ENCODE measurements at regions of chr1 and their contacts with region 1.

Region 1: DNA sequence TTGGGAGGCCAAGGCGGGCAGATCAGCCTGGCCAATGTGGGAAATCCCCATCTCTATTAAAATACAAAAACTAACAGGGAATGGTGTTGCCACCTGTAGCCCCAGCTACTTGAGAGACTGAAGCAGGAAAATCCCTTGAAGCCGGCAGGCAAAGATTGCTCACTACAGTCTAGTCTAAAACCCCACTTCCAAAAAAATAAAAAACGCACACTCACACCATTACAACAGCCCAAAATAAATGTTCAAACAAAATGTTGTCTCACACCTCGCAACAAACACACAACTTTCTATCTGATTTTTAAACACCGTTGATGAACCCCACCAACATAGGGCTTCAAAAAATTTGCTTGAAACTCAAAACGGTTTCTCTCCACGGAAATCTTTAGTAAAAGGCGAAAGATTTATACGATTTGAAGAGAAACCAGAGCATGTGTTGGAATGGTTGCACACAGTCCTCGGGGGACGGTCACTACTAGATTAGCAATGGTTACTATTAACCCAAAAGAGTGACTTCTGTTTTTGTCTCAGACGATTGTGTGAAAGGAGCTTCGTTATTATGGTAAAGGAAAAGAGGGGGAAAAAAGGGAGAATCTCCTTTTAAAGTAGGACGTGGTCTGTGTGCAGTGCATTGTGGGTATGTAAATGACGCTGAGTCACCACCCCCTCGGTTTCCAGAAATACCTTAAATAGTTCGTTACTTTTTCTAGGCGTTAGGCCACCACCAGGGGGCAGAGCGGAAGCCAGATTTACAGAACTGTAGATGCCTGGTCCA is at the start of gene RNU5D-1:
- DNase-seq: peak; percentile 98
- H3K4me3 ChIP-seq: peak within 1 kb of the TSS; percentile 46
- H3K27ac ChIP-seq: peak within 1 kb of the TSS; percentile 96
- H3K4me1 ChIP-seq: peaks cover 52% of the 10 kb centered on the region
- CTCF ChIP-seq: peak; percentile 91
- total RNA-seq, gene RNU5D-1: not detected in 2 replicates

Region 2: GRCh38 chr1:44714944-44715571 is 15.9 kb before region 1 on chr1:
- CTCF ChIA-PET with region 1: interaction called, 3 read pairs
- POLR2A ChIA-PET with region 1: interaction called, 137 read pairs
- intact Hi-C with region 1: no loop called
- DNase-seq: peak; percentile 92
- H3K4me3 ChIP-seq: peak overlapping the region; percentile 21
- H3K27ac ChIP-seq: peak overlapping the region; percentile 96
- H3K4me1 ChIP-seq: peaks cover 80% of the 10 kb centered on the region
- CTCF ChIP-seq: peak; percentile 97

Region 3: GRCh38 chr1:44775078-44775929 is 44.4 kb after region 1 on chr1 and contains the start of gene RPS8:
- CTCF ChIA-PET with region 1: interaction called, 3 read pairs
- POLR2A ChIA-PET with region 1: interaction called, 33 read pairs
- intact Hi-C with region 1: loop called (anchors 2 kb)
- DNase-seq: peak; percentile 95
- H3K4me3 ChIP-seq: peak within 1 kb of the TSS; percentile 99
- H3K27ac ChIP-seq: peak within 1 kb of the TSS; percentile 68
- H3K4me1 ChIP-seq: peaks cover 32% of the 10 kb centered on the region
- CTCF ChIP-seq: no peak
- total RNA-seq, gene RPS8: 4,149 and 4,355 TPM in 2 replicates

Region 4: DNA sequence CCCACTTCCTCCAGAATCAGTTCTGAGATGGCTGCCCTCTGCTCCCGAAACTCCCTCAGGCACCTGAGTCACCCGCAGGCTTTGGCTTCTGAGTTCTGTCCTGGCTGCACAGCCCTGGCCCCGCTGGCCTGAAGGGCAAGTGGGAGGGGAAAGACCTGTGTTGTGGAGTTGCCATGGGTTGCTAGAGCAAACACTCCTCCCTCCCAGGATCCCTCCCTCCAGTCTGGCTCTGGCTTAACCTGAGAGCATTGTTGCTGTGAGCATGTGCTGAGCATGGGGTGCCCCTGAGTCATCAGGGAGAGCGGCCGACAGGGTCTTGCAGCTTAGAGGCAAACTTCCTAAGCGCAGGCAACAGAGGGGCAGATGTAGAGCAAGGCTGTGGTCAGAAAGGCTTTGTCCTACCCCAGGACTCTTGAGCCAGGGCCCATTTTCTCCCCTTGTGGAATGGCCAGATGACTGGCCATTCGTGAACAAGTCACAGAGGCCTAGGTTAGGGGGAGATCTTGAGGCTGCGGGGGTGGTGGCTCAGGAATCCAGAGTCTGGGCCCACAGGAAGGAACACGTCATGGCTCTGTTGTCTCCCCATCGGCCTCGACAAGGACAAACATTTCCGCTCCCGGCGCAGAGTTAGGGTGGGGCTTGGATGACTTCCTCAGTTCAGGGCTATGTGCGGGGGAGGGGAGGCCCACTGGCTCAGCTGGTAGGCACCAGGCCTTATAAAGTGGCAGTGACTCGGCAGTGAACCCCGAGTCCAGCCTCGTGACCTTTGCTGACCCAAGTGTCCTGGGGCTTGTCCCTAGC is 76.5 kb after region 1 on chr1 and contains the start of gene DYNLT4:
- CTCF ChIA-PET with region 1: interaction called, 8 read pairs
- POLR2A ChIA-PET with region 1: interaction called, 14 read pairs
- intact Hi-C with region 1: no loop called
- DNase-seq: peak; percentile 68
- H3K4me3 ChIP-seq: no peak within 1 kb of the TSS
- H3K27ac ChIP-seq: peak within 1 kb of the TSS; percentile 74
- H3K4me1 ChIP-seq: peaks cover 44% of the 10 kb centered on the region
- CTCF ChIP-seq: no peak
- total RNA-seq, gene DYNLT4: 1.5 TPM in 1 of 2 replicates, not detected in the other

Region 5: GRCh38 chr1:44819608-44820327 is 88.8 kb after region 1 on chr1:
- CTCF ChIA-PET with region 1: interaction called, 13 read pairs
- POLR2A ChIA-PET with region 1: interaction called, 50 read pairs
- intact Hi-C with region 1: loop called (anchors 1 kb)
- DNase-seq: peak; percentile 95
- H3K4me3 ChIP-seq: peak overlapping the region; percentile 67
- H3K27ac ChIP-seq: peak overlapping the region; percentile 93
- H3K4me1 ChIP-seq: peaks cover 36% of the 10 kb centered on the region
- CTCF ChIP-seq: no peak

Region 6: DNA sequence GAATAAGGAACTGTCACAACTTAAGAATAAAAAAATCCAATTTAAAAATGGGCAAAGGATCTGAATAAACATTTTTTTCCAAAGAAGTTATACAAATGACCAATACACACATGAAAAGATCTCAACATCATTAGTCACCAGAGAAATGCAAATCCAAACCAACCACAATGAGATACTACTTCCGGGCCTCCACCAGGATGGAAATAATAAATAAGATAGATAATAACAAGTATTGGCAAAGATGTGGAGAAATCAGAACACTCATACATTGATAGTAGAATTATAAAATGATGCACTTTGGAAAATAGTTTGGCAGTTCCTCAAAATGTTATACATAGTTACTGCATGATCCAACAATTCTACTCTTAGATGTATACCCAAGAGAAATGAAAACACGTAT is 456.8 kb after region 1 on chr1:
- CTCF ChIA-PET with region 1: no interaction called
- POLR2A ChIA-PET with region 1: no interaction called
- intact Hi-C with region 1: no loop called
- DNase-seq: no peak
- H3K4me3 ChIP-seq: no peak overlapping the region
- H3K27ac ChIP-seq: no peak overlapping the region
- H3K4me1 ChIP-seq: no peaks in the 10 kb centered on the region
- CTCF ChIP-seq: no peak

Region 7: GRCh38 chr1:45490626-45491486 is 759.9 kb after region 1 on chr1 and contains the start of gene TESK2:
- CTCF ChIA-PET with region 1: no interaction called
- POLR2A ChIA-PET with region 1: no interaction called
- intact Hi-C with region 1: loop called (anchors 10 kb)
- DNase-seq: peak; percentile 100
- H3K4me3 ChIP-seq: peak within 1 kb of the TSS; percentile 75
- H3K27ac ChIP-seq: peak within 1 kb of the TSS; percentile 15
- H3K4me1 ChIP-seq: peaks cover 32% of the 10 kb centered on the region
- CTCF ChIP-seq: no peak
- total RNA-seq, gene TESK2: 4.9 and 5.0 TPM in 2 replicates

Measured in OCI-LY7 (cell line).